ENCODE measurements at regions of chr13 and their contacts with region 1.

Region 1: DNA sequence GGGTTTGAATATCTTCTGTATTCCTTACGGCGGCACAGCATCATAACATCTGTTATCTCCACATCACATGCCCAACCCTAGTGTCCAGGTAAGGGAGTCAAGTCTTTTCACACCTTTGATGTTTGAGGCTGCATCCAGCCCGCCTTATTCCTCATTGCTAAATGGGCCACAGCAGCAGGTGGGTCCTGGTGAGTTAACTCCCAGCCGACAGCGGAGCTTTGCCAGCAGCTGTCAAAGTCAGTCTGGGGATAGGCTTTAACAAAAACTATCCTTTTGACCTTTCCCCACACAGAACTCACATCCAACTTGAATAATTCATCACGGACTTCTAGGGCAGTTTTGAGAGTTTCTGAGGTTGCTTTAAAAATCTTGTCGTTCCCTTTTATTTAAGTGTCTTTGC is 235.1 kb downstream of the DLEU7 start:
- DNase-seq: no peak
- ATAC-seq: no peak
- H3K4me3 ChIP-seq: no peak overlapping the region
- H3K27ac ChIP-seq: no peak overlapping the region
- H3K4me1 ChIP-seq: peaks cover 0 to 4% (median 0%) of the 10 kb centered on the region in 12 donors
- H3K27me3 ChIP-seq: no peaks in the 10 kb centered on the region
- CTCF ChIP-seq: no peak
- POLR2A ChIP-seq: no peak

Region 2: DNA sequence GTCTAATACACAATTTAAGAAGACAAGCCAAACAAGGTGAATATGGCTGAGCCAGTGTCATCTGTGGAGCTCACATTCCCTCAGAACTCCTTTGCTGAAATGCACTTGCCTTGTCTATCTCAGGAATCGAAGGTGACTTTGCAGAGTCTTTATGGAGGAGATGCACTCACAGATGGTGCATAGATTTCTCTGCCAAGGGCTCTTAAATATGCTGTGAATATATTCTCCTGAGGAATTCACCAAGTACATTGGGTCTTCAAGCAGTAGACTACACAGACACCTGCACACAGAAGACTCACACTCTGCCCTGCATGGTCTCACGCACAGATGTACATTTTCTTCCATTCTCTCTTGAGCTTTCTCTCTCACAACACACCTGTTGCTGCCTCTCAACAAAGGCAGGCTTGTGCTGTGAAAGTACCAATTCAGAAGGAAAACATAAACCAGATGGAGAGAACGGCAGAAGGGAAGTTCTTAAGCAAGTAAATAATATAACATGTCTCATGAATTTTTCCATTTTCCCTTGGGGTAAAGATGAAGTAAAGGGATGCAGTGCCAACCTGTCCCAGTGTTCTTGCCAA is 60.4 kb after region 1 on chr13:
- intact Hi-C with region 1: loop called in 1 of 10 experiments (anchors 10 kb)
- DNase-seq: no peak
- ATAC-seq: no peak
- H3K4me3 ChIP-seq: no peak overlapping the region
- H3K27ac ChIP-seq: no peak overlapping the region
- H3K4me1 ChIP-seq: peaks cover 0 to 15% (median 0%) of the 10 kb centered on the region in 12 donors
- H3K27me3 ChIP-seq: no peaks in the 10 kb centered on the region
- CTCF ChIP-seq: no peak
- POLR2A ChIP-seq: no peak

Region 3: DNA sequence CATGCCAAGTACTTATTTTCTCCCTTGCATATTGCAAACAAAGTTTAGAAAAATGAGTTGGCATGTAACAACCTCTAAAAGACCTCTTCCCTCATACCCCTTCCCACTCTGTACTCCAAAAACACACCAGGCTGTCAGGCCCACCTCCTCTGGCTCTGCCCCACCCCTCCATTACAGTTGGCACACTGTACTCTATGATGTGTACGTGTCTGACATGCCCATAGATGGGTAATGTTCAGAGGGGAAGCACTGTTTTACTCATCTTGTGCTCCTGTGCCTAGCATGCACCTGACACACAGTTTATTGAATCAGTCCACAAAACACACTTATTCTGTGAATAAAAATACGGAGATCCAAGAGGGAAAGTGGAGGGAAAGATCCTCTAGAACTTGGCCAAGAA is 776.7 kb after region 1 on chr13:
- intact Hi-C with region 1: no loop called
- DNase-seq: no peak
- ATAC-seq: no peak
- H3K4me3 ChIP-seq: no peak overlapping the region
- H3K27ac ChIP-seq: no peak overlapping the region
- H3K4me1 ChIP-seq: no peaks in the 10 kb centered on the region
- H3K27me3 ChIP-seq: no peaks in the 10 kb centered on the region
- CTCF ChIP-seq: no peak
- POLR2A ChIP-seq: no peak

Measured in heart left ventricle (tissue), 16 donors.